ENCODE measurements at regions of chr1 and their contacts with region 1.

Region 1: DNA sequence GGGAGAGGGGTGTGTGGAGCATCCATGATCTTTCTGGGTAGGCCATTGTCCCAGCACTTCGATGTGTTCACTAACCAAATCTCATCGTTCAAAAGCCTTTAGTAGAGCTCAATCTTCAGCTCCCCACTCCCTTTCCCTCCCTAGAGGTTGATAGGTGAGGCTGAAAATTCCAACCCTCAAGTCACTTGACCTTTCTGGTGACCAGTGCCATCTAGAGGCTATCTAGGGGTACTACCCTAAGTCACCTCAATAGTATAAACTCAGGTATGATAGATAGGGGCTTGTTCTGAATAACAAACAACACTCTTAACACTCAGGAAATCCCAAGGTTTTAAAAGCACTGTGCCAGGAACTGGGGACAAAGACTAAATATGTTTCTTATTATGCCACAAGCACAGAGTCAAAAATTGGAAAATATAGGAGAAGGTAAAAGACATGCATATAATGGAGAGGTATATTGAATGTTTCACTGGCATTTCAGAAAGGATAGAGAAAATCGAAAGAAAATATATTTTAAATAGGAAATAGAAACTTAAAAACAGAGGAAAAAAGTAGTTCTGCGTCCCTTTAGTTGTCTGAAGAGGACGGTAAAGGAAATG is 42.9 kb upstream of the CD53 start:
- DNase-seq: peak; percentile 16
- ATAC-seq: peak; percentile 100
- H3K4me3 Mint-ChIP-seq: no peak overlapping the region
- H3K27ac Mint-ChIP-seq: no peak overlapping the region
- H3K4me1 Mint-ChIP-seq: peaks cover 4% of the 10 kb centered on the region
- H3K27me3 Mint-ChIP-seq: peaks cover 9% of the 10 kb centered on the region; the same call in 1 of the 2 replicates
- CTCF ChIP-seq: peak; percentile 69

Region 2: GRCh38 chr1:110787328-110788071 is 42.6 kb before region 1 on chr1:
- CTCF ChIA-PET with region 1: interaction called, 16 read pairs
- POLR2A ChIA-PET with region 1: no interaction called
- DNase-seq: no peak
- ATAC-seq: no peak
- H3K4me3 Mint-ChIP-seq: no peak overlapping the region
- H3K27ac Mint-ChIP-seq: no peak overlapping the region
- H3K4me1 Mint-ChIP-seq: no peaks in the 10 kb centered on the region
- H3K27me3 Mint-ChIP-seq: peaks cover 40% of the 10 kb centered on the region
- CTCF ChIP-seq: no peak

Region 3: GRCh38 chr1:110816130-110816529 is 13.9 kb before region 1 on chr1:
- CTCF ChIA-PET with region 1: interaction called, 10 read pairs
- POLR2A ChIA-PET with region 1: no interaction called
- DNase-seq: no peak
- ATAC-seq: no peak
- H3K4me3 Mint-ChIP-seq: no peak overlapping the region
- H3K27ac Mint-ChIP-seq: no peak overlapping the region
- H3K4me1 Mint-ChIP-seq: no peaks in the 10 kb centered on the region
- H3K27me3 Mint-ChIP-seq: peaks cover 41% of the 10 kb centered on the region
- CTCF ChIP-seq: no peak

Region 4: GRCh38 chr1:110846861-110847260 is 16.8 kb after region 1 on chr1:
- CTCF ChIA-PET with region 1: interaction called, 11 read pairs
- POLR2A ChIA-PET with region 1: no interaction called
- DNase-seq: no peak
- ATAC-seq: no peak
- H3K4me3 Mint-ChIP-seq: no peak overlapping the region
- H3K27ac Mint-ChIP-seq: no peak overlapping the region
- H3K4me1 Mint-ChIP-seq: no peaks in the 10 kb centered on the region
- H3K27me3 Mint-ChIP-seq: peaks cover 3% of the 10 kb centered on the region
- CTCF ChIP-seq: no peak

Region 5: DNA sequence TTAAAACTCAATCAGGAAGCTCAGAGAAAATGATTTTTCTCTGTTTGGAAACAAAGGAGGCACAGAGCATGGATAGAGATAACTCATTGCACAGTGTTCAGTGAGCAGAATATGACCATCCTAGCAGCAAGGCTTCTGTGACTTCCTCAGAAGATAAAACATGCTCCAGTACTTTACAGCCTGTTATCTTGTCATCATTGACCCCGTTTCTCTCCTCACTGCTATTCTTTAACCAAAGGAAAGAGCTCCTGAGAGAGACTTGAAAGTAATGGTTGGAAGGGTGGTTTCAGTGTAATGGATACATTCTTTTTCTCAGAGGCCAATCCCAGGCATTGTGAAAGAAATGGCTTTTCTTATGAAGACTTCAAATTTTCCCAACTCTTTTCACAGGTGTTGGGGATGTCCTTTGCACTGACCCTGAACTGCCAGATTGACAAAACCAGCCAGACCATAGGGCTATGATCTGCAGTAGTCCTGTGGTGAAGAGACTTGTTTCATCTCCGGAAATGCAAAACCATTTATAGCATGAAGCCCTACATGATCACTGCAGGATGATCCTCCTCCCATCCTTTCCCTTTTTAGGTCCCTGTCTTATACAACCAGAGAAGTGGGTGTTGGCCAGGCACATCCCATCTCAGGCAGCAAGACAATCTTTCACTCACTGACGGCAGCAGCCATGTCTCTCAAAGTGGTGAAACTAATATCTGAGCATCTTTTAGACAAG is 68.8 kb after region 1 on chr1:
- CTCF ChIA-PET with region 1: no interaction called
- POLR2A ChIA-PET with region 1: no interaction called
- DNase-seq: no peak
- ATAC-seq: no peak
- H3K4me3 Mint-ChIP-seq: no peak overlapping the region
- H3K27ac Mint-ChIP-seq: no peak overlapping the region
- H3K4me1 Mint-ChIP-seq: peaks cover 5% of the 10 kb centered on the region
- H3K27me3 Mint-ChIP-seq: no peaks in the 10 kb centered on the region
- CTCF ChIP-seq: no peak

Region 6: GRCh38 chr1:110986407-110986891 is 156.4 kb after region 1 on chr1:
- CTCF ChIA-PET with region 1: interaction called, 11 read pairs
- POLR2A ChIA-PET with region 1: no interaction called
- DNase-seq: no peak
- ATAC-seq: no peak
- H3K4me3 Mint-ChIP-seq: no peak overlapping the region
- H3K27ac Mint-ChIP-seq: no peak overlapping the region
- H3K4me1 Mint-ChIP-seq: peaks cover 5% of the 10 kb centered on the region
- H3K27me3 Mint-ChIP-seq: peaks cover 14% of the 10 kb centered on the region
- CTCF ChIP-seq: no peak